CD4-positive, alpha-beta memory T cell (primary cell): ENCODE measurements at regions of chr21 and their contacts with region 1.

Region 1: GRCh38 chr21:17611414-17612022 is 1.2 kb downstream of the BTG3 start:
- DNase-seq: peak; percentile 80 to 91 (median 84)
- H3K4me3 ChIP-seq: peak overlapping the region; percentile 87 to 97
- H3K4me3 Mint-ChIP-seq: peak overlapping the region; percentile 91 to 99 (median 95)
- H3K27ac ChIP-seq: peak overlapping the region; percentile 84
- H3K27ac Mint-ChIP-seq: peak overlapping the region; percentile 95 to 100 (median 99)
- H3K4me1 ChIP-seq: peaks cover 27% of the 10 kb centered on the region
- H3K4me1 Mint-ChIP-seq: peaks cover 17 to 50% (median 25%) of the 10 kb centered on the region in 4 donors
- H3K27me3 ChIP-seq: no peaks in the 10 kb centered on the region
- H3K27me3 Mint-ChIP-seq: no peaks in the 10 kb centered on the region

Region 2: DNA sequence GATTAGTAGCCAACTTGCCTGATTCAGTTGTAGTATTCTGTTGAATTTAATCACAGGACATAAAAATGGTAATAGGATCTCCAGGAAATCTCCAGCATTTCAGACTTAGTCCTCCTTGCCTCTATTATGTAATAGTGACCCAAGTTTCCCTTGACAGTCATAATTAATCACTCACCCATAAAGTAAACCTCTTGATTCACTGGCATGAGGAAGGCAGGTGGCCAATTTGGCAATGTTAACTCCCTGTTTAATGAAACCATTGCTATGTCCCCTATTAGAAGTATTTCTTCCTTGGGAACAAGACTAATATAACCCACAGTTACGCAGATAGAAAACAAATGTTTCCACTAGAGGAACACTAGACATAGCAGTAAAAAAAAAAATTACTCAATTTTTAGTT is 703.4 kb before region 1 on chr21:
- CTCF ChIA-PET with region 1: no interaction called
- POLR2A ChIA-PET with region 1: no interaction called
- intact Hi-C with region 1: no loop called
- DNase-seq: no peak
- H3K4me3 ChIP-seq: no peak overlapping the region
- H3K4me3 Mint-ChIP-seq: no peak overlapping the region
- H3K27ac ChIP-seq: no peak overlapping the region
- H3K27ac Mint-ChIP-seq: no peak overlapping the region
- H3K4me1 ChIP-seq: no peaks in the 10 kb centered on the region
- H3K4me1 Mint-ChIP-seq: no peaks in the 10 kb centered on the region
- H3K27me3 ChIP-seq: no peaks in the 10 kb centered on the region
- H3K27me3 Mint-ChIP-seq: no peaks in the 10 kb centered on the region

Region 3: DNA sequence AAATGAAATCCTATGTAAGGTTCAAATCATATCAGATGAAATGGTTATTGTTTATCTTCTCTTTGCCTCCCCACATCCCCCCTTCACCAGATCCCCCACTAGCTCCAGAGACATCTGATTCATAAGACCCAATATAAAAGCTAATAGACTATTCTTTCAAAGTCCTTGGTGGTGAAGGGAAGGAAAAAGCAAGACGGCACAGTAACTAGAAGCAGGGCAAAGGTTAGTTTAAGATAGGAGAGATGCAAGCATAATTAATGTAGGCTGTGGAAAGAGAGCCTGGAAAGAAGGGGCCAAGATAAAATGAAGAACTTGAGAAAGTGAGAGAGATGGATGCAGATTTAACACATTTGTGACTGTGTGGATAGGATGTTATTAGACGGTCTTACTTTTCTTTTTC is 32.6 kb before region 1 on chr21:
- CTCF ChIA-PET with region 1: no interaction called
- POLR2A ChIA-PET with region 1: no interaction called
- intact Hi-C with region 1: no loop called
- DNase-seq: no peak
- H3K4me3 ChIP-seq: no peak overlapping the region
- H3K4me3 Mint-ChIP-seq: no peak overlapping the region
- H3K27ac ChIP-seq: no peak overlapping the region
- H3K27ac Mint-ChIP-seq: no peak overlapping the region
- H3K4me1 ChIP-seq: no peaks in the 10 kb centered on the region
- H3K4me1 Mint-ChIP-seq: no peaks in the 10 kb centered on the region
- H3K27me3 ChIP-seq: no peaks in the 10 kb centered on the region
- H3K27me3 Mint-ChIP-seq: no peaks in the 10 kb centered on the region

Region 4: DNA sequence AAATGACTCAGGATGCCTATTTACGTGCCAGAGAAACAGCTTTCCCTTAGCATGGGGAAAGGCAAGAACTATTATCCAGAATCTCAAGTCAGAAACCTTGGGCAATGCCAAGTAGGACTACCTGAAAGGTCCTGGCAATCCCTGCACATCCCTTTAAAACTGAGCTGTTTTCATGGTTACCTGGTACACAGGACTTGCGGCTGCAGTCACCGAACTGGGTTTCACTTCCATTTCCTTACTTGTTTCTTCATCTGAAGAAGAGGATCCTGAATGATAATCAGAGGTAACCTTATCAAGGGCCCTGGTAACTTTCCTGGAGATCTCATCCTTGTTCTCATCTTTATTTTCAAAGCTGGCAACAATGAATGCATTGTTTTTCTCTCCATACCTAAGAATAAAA is 13.1 kb before region 1 on chr21:
- CTCF ChIA-PET with region 1: interaction called, 6 read pairs
- POLR2A ChIA-PET with region 1: interaction called, 11 read pairs
- intact Hi-C with region 1: no loop called
- DNase-seq: no peak
- H3K4me3 ChIP-seq: no peak overlapping the region
- H3K4me3 Mint-ChIP-seq: peak overlapping the region in 1 of 8 donors; percentile 3
- H3K27ac ChIP-seq: no peak overlapping the region
- H3K27ac Mint-ChIP-seq: peak overlapping the region in 1 of 7 donors; percentile 4
- H3K4me1 ChIP-seq: no peaks in the 10 kb centered on the region
- H3K4me1 Mint-ChIP-seq: peaks cover 0 to 10% (median 4%) of the 10 kb centered on the region in 4 donors
- H3K27me3 ChIP-seq: no peaks in the 10 kb centered on the region
- H3K27me3 Mint-ChIP-seq: no peaks in the 10 kb centered on the region